ENCODE measurements at regions of chr1 and their contacts with region 1.

Region 1: DNA sequence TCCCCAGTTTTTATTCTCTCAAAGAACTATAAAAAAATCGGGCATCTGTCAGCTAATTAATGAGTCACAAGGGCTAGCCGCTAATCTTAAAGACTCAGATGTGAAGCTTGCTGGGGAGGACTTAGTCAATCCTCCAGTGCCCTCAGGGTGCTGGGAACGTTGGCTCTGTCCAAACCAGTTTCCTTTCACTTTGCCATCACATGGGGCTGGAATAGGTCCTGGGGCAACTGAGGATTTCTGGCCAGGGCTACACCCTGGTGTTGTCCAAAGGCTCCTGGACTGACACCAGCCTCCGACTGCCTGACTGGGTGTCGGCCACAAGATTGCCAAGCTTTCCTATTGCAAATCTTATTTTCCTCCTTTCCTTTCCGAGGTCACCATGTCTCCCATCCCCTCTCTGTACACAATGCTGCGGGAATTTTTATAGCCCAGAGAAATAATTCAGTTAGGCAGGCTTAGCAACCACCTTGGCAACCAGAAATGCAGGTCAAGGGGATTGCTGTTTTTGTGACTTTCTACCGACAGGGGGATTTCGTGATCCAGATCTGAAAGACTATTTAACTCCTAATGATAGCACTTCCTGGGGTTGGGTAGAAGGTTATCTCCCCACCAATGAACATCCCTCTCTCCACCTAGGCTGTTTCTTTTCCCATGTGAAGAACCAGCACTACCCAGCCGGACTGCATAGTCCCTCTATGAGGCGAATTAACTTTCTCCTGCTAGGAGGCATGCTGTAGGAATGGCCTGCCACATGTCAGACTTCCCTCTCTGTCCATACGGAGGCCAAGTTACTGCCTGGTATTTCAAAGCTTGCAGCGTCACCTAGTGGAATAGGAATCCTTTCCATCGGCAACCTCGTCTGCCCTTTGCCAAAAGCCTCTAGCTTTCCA is 29.9 kb upstream of the CTBS start:
- DNase-seq: peak; percentile 59 to 79 (median 73)
- ATAC-seq: peak; percentile 88
- H3K4me3 ChIP-seq: peak overlapping the region; percentile 46
- H3K27ac ChIP-seq: peak overlapping the region; percentile 79
- H3K4me1 ChIP-seq: peaks cover 2% of the 10 kb centered on the region
- H3K27me3 ChIP-seq: no peaks in the 10 kb centered on the region

Region 2: DNA sequence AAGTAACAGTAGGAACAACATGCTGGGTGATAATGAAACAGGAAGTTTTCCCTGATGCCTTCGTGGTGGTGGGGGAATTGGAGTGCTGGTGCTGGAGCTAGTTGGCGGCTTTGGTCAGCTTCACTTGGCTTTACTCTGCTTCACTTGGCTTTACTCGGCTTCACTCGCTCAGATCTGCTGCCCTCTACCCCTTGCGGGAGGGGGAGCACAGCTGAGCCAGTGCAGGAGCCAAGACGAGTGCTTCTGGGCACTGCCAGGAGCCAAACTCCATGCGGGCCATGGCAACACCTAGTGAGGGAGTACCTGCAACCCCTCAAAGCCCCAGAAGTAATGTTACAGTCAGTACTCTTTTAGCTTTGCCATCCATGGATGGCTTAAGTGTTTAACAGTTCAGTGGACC is 470.7 kb before region 1 on chr1:
- intact Hi-C with region 1: loop called in 1 of 4 experiments (anchors 10 kb)
- DNase-seq: peak in 2 of 3 donors; percentile 24 to 37
- ATAC-seq: no peak
- H3K4me3 ChIP-seq: no peak overlapping the region
- H3K27ac ChIP-seq: no peak overlapping the region
- H3K4me1 ChIP-seq: no peaks in the 10 kb centered on the region
- H3K27me3 ChIP-seq: no peaks in the 10 kb centered on the region

Region 3: GRCh38 chr1:84450910-84451309 is 153.3 kb before region 1 on chr1:
- intact Hi-C with region 1: loop called in 1 of 4 experiments (anchors 10 kb)
- DNase-seq: no peak
- ATAC-seq: no peak
- H3K4me3 ChIP-seq: no peak overlapping the region
- H3K27ac ChIP-seq: no peak overlapping the region
- H3K4me1 ChIP-seq: no peaks in the 10 kb centered on the region
- H3K27me3 ChIP-seq: no peaks in the 10 kb centered on the region